BJ (cell line): ENCODE measurements at regions of chr17 and their contacts with region 1.

Region 1: GRCh38 chr17:75238684-75239191 is 22.7 kb downstream of the GGA3 start:
- DNase-seq: no peak
- H3K4me3 ChIP-seq: no peak overlapping the region
- H3K27me3 ChIP-seq: no peaks in the 10 kb centered on the region
- CTCF ChIP-seq: peak; percentile 91

Region 2: DNA sequence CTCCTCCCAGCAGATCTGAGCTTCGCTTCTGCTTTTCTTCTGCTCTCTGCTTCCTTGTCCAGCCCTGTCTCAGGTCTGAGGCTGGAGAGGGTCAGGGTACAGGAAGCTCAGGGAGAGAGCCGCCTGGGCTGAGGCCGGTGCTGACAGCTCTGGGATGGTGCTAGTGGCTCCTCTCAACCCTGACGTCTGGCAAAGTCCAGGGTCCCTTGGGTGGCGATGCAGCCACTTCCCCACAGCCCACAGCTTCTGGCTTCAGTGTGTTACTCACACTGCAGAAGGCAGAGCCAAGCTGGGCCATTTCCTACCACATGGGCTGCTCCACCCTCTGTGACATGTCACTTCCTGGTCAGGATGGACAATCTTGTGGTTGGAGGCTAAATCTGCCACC is 692.9 kb before region 1 on chr17 and contains the start of gene CD300C:
- CTCF ChIA-PET with region 1: no interaction called
- POLR2A ChIA-PET with region 1: no interaction called
- DNase-seq: no peak
- H3K4me3 ChIP-seq: no peak within 1 kb of the TSS
- H3K27me3 ChIP-seq: no peaks in the 10 kb centered on the region
- CTCF ChIP-seq: no peak
- polyA plus RNA-seq, gene CD300C: 0.05 TPM in 1 of 2 replicates, not detected in the other

Region 3: DNA sequence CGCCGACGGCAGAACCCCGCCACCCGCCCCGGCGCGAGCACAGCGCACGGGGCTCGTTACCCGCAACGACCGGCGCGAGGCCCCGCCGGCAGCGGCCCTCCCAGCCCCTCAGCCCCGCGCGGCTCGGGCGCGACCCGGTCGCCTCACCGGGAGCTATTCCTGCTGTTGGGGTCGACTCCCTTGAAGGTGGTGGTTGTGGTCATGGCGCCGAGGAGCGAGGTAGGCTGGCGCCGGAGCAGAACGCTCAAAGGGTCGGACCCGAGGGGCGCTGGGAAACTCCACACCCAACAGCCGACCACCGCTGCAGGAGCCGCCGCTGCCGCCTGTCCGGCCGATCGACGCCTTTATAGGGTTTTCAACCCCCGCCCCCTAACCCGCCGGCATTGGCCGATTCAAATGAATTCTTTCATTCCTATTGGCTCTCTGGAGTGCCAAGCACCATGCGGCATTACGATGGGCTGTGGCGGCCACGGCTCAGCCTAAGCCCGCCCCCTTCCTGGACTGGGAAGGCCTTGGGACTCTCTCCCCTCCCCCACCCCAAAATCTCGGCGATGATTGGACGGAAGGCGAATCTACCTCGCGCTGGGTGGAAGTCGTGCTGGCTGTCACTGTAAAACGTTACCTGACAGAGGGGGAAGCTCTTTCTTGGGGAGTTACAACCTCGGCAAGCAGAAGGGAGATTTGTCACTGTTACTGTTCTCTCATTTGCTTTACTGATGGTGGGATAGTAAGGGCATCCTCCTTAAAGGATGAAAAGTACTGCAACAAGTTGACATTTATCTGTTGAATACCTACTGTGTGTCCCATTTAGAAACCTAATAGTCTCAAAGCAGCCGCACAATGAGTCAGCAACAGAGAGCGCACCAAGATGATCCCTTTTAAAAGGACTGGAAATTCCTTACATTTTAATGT is 84.3 kb before region 1 on chr17 and contains the start of gene JPT1:
- CTCF ChIA-PET with region 1: no interaction called
- POLR2A ChIA-PET with region 1: no interaction called
- DNase-seq: peak; percentile 92
- H3K4me3 ChIP-seq: peak within 1 kb of the TSS; percentile 68
- H3K27me3 ChIP-seq: no peaks in the 10 kb centered on the region
- CTCF ChIP-seq: no peak
- polyA plus RNA-seq, gene JPT1: 65.5 and 111 TPM in 2 replicates

Region 4: DNA sequence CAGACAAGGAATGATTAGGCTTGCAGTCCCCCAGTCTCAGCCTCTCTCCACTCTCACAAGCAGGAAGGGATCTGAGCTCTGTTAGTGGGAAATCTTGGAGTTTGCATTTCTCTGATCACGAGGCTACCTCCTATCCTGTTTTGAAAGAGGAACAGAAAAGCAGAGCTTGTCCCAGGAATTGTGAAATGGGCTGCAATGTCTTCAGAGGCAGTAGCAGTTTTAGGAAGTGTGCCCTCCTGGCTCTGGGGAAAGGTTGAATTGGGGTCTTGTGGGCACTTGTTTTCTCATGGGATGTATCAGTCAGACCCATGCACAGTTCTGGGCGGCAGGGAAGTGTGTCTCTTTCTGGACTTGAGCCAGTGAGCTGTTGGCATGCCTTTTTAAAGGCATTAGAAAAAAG is 10.4 kb before region 1 on chr17:
- CTCF ChIA-PET with region 1: interaction called, 47 read pairs
- POLR2A ChIA-PET with region 1: no interaction called
- DNase-seq: no peak
- H3K4me3 ChIP-seq: no peak overlapping the region
- H3K27me3 ChIP-seq: no peaks in the 10 kb centered on the region
- CTCF ChIP-seq: no peak

Region 5: GRCh38 chr17:75250009-75250471 is 11.3 kb after region 1 on chr17:
- CTCF ChIA-PET with region 1: interaction called, 50 read pairs
- POLR2A ChIA-PET with region 1: no interaction called
- DNase-seq: no peak
- H3K4me3 ChIP-seq: no peak overlapping the region
- H3K27me3 ChIP-seq: no peaks in the 10 kb centered on the region
- CTCF ChIP-seq: no peak

Region 6: GRCh38 chr17:75412455-75413317 is 173.9 kb after region 1 on chr17:
- CTCF ChIA-PET with region 1: interaction called, 19 read pairs
- POLR2A ChIA-PET with region 1: no interaction called
- DNase-seq: no peak
- H3K4me3 ChIP-seq: no peak overlapping the region
- H3K27me3 ChIP-seq: peaks cover 6% of the 10 kb centered on the region
- CTCF ChIP-seq: peak; percentile 77